CD14-positive monocyte (primary cell): ENCODE measurements at regions of chr3 and their contacts with region 1.

Region 1: GRCh38 chr3:58188173-58188564 is 22.6 kb downstream of the DNASE1L3 start:
- DNase-seq: no peak
- H3K4me3 ChIP-seq: no peak overlapping the region
- H3K4me3 Mint-ChIP-seq: no peak overlapping the region
- H3K27ac ChIP-seq: no peak overlapping the region
- H3K27ac Mint-ChIP-seq: no peak overlapping the region
- H3K4me1 ChIP-seq: peaks cover 0 to 6% of the 10 kb centered on the region in 2 donors
- H3K4me1 Mint-ChIP-seq: peaks cover 6% of the 10 kb centered on the region
- H3K27me3 ChIP-seq: no peaks in the 10 kb centered on the region
- H3K27me3 Mint-ChIP-seq: peaks cover 0 to 5% (median 0%) of the 10 kb centered on the region in 3 donors
- CTCF ChIP-seq: no peak

Region 2: GRCh38 chr3:58144478-58145325 is 43.5 kb before region 1 on chr3:
- intact Hi-C with region 1: no loop called
- DNase-seq: no peak
- H3K4me3 ChIP-seq: no peak overlapping the region
- H3K4me3 Mint-ChIP-seq: no peak overlapping the region
- H3K27ac ChIP-seq: no peak overlapping the region
- H3K27ac Mint-ChIP-seq: no peak overlapping the region
- H3K4me1 ChIP-seq: no peaks in the 10 kb centered on the region
- H3K4me1 Mint-ChIP-seq: no peaks in the 10 kb centered on the region
- H3K27me3 ChIP-seq: no peaks in the 10 kb centered on the region
- H3K27me3 Mint-ChIP-seq: peaks cover 0 to 2% (median 0%) of the 10 kb centered on the region in 3 donors
- CTCF ChIP-seq: no peak

Region 3: GRCh38 chr3:58299839-58300516 is 111.8 kb after region 1 on chr3:
- intact Hi-C with region 1: loop called (anchors 2 kb)
- DNase-seq: peak; percentile 7 to 19 (median 17)
- H3K4me3 ChIP-seq: no peak overlapping the region
- H3K4me3 Mint-ChIP-seq: no peak overlapping the region
- H3K27ac ChIP-seq: no peak overlapping the region
- H3K27ac Mint-ChIP-seq: no peak overlapping the region
- H3K4me1 ChIP-seq: no peaks in the 10 kb centered on the region
- H3K4me1 Mint-ChIP-seq: no peaks in the 10 kb centered on the region
- H3K27me3 ChIP-seq: no peaks in the 10 kb centered on the region
- H3K27me3 Mint-ChIP-seq: peaks cover 12 to 25% (median 19%) of the 10 kb centered on the region in 3 donors
- CTCF ChIP-seq: peak; percentile 72

Region 4: GRCh38 chr3:58414538-58415197 is 226.5 kb after region 1 on chr3:
- intact Hi-C with region 1: loop called in 1 of 2 experiments (anchors 5 kb)
- DNase-seq: peak; percentile 46 to 58 (median 47)
- H3K4me3 ChIP-seq: no peak overlapping the region
- H3K4me3 Mint-ChIP-seq: no peak overlapping the region
- H3K27ac ChIP-seq: peak overlapping the region in 1 of 2 donors; percentile 53
- H3K27ac Mint-ChIP-seq: peak overlapping the region in 2 of 7 donors; percentile 3 to 82
- H3K4me1 ChIP-seq: peaks cover 0 to 3% of the 10 kb centered on the region in 2 donors
- H3K4me1 Mint-ChIP-seq: peaks cover 11% of the 10 kb centered on the region
- H3K27me3 ChIP-seq: no peaks in the 10 kb centered on the region
- H3K27me3 Mint-ChIP-seq: peaks cover 0 to 1% (median 0%) of the 10 kb centered on the region in 3 donors
- CTCF ChIP-seq: peak; percentile 74